Activated CD4-positive, alpha-beta memory T cell treated with anti-CD3 and anti-CD28 coated beads, Interleukin-2, amount 10 ng/mL, durations not matched to agents 7 days and 5 days (primary cell): ENCODE measurements at regions of chr19 and their contacts with region 1.

Region 1: DNA sequence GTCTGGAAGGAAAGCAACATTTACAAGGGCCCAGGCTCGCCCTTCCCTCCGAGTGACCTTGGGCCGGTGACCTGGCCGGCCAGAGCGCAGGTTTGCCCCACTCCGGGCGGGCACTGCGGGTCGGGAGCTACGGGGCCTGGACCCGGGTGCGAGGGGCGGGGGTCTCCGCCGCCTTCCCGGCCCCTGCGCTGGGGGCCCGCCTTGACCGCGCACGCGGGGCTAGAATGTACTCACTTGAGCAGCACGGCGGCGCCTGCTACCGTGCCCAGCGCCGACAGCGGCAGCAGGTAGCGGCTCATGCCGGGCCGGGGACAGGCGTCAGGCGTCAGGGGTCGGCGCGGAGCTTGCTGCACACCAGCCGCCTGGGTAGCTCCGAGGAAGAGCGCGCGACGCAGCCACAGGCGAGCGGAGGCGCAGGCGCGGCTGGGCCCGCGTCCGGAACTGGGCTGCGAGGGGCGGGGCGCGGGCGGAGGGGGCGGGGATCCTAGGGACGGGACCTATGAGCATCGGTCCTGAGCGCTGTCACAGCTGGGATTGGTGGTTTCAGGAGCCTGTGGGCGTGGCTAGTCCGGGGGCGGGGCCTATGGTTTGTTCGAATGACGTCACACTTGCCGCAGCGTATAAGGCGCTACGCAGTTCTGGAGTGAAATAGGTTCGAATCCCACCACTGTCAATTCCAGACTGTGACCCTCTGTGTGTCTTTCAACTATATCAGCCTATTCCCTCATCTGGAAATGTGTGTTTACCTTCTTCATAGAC is at the start of gene RDH13:
- DNase-seq: peak; percentile 99
- H3K4me3 Mint-ChIP-seq: peak within 1 kb of the TSS; percentile 83
- H3K27ac Mint-ChIP-seq: peak within 1 kb of the TSS; percentile 54
- H3K4me1 Mint-ChIP-seq: peaks cover 20% of the 10 kb centered on the region
- H3K27me3 Mint-ChIP-seq: peaks cover 23% of the 10 kb centered on the region
- total RNA-seq, gene RDH13: 15.3 to 15.5 TPM

Region 2: GRCh38 chr19:54882758-54883157 is 180.2 kb before region 1 on chr19:
- CTCF ChIA-PET with region 1: interaction called, 14 read pairs
- POLR2A ChIA-PET with region 1: no interaction called
- DNase-seq: peak; percentile 21
- H3K4me3 Mint-ChIP-seq: peak overlapping the region; percentile 51
- H3K27ac Mint-ChIP-seq: peak overlapping the region; percentile 62
- H3K4me1 Mint-ChIP-seq: peaks cover 9% of the 10 kb centered on the region
- H3K27me3 Mint-ChIP-seq: peaks cover 8% of the 10 kb centered on the region

Region 3: GRCh38 chr19:54995561-54995960 is 67.4 kb before region 1 on chr19:
- CTCF ChIA-PET with region 1: no interaction called
- POLR2A ChIA-PET with region 1: no interaction called
- DNase-seq: no peak
- H3K4me3 Mint-ChIP-seq: no peak overlapping the region
- H3K27ac Mint-ChIP-seq: no peak overlapping the region
- H3K4me1 Mint-ChIP-seq: no peaks in the 10 kb centered on the region
- H3K27me3 Mint-ChIP-seq: no peaks in the 10 kb centered on the region

Region 4: GRCh38 chr19:55080968-55081772 is 18.3 kb after region 1 on chr19:
- CTCF ChIA-PET with region 1: interaction called, 5 read pairs
- POLR2A ChIA-PET with region 1: interaction called, 18 read pairs
- DNase-seq: peak; percentile 97
- H3K4me3 Mint-ChIP-seq: peak overlapping the region; percentile 77
- H3K27ac Mint-ChIP-seq: peak overlapping the region; percentile 84
- H3K4me1 Mint-ChIP-seq: peaks cover 36% of the 10 kb centered on the region
- H3K27me3 Mint-ChIP-seq: peaks cover 43% of the 10 kb centered on the region

Region 5: GRCh38 chr19:55117636-55118391 is 54.9 kb after region 1 on chr19 and contains the start of gene PPP1R12C:
- CTCF ChIA-PET with region 1: interaction called, 4 read pairs
- POLR2A ChIA-PET with region 1: interaction called, 12 read pairs
- DNase-seq: peak; percentile 98
- H3K4me3 Mint-ChIP-seq: peak within 1 kb of the TSS; percentile 93
- H3K27ac Mint-ChIP-seq: peak within 1 kb of the TSS; percentile 91
- H3K4me1 Mint-ChIP-seq: peaks cover 46% of the 10 kb centered on the region
- H3K27me3 Mint-ChIP-seq: peaks cover 9% of the 10 kb centered on the region
- total RNA-seq, gene PPP1R12C: 132 to 134 TPM